Activated CD4-positive, alpha-beta memory T cell treated with anti-CD3 and anti-CD28 coated beads for 36 hours (primary cell): ENCODE measurements at regions of chr11 and their contacts with region 1.

Region 1: DNA sequence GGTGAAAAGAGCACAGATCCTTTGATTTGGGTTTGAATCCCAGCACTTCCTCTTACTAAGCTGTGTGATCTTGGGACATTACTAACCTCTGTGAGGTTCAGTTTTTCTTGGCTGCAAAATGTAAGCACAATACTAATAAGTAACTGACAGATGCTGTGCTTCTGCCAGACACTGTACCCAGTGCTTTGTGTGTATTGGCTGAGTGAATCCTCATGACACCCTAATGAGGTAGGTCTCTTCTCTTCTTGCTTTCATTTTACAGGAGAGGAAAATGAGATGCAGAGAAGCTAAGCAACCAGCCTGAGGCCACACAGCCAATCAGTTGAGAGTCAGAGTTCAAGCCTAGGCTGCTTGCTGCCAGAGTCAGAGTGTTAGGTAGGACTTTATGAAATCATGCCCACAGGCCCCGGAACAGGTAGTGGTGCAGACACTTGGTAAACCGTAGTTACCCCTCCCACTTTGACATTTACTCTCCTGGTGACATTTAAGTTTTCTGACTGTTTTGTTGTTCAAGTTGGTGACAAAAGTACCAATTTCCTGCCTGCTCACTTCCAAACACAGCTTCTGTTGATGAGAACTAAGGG is 21.2 kb downstream of the PTPRJ start:
- DNase-seq: peak; percentile 91
- H3K4me3 Mint-ChIP-seq: peak overlapping the region; percentile 72
- H3K27ac Mint-ChIP-seq: peak overlapping the region; percentile 97
- H3K4me1 Mint-ChIP-seq: peaks cover 84% of the 10 kb centered on the region
- H3K27me3 Mint-ChIP-seq: no peaks in the 10 kb centered on the region

Region 2: DNA sequence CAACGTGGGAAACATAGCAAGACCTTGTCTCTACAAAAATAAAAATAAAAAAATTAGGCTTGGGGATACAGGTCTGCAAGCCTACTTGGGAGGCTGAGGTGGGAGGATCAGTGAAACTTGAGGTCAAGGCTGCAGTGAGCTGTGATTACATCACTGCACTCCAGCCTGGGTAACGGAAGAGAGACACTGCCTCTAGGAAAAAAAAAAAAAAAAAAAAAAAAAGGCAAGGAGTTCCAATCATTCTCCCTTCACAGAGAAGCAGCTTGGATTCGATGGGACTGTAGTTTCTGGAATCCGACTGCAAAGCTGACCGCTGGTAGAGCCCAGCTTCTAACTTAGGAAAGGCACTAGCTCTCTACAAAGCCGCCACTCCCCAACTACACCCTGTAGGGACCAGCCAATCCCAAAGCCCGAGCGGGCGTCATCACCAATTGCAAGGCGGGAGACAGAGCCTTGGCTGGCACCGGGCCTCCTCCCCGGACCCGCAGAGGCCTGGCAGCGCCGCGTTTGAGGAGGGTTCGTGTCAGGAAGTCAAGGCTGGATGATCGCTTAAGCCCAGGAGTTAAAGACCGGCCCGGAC is 787.5 kb before region 1 on chr11:
- CTCF ChIA-PET with region 1: no interaction called
- POLR2A ChIA-PET with region 1: no interaction called
- intact Hi-C with region 1: loop called (anchors 10 kb)
- DNase-seq: peak; percentile 94
- H3K4me3 Mint-ChIP-seq: peak overlapping the region; percentile 97
- H3K27ac Mint-ChIP-seq: peak overlapping the region; percentile 99
- H3K4me1 Mint-ChIP-seq: peaks cover 28% of the 10 kb centered on the region
- H3K27me3 Mint-ChIP-seq: no peaks in the 10 kb centered on the region

Region 3: DNA sequence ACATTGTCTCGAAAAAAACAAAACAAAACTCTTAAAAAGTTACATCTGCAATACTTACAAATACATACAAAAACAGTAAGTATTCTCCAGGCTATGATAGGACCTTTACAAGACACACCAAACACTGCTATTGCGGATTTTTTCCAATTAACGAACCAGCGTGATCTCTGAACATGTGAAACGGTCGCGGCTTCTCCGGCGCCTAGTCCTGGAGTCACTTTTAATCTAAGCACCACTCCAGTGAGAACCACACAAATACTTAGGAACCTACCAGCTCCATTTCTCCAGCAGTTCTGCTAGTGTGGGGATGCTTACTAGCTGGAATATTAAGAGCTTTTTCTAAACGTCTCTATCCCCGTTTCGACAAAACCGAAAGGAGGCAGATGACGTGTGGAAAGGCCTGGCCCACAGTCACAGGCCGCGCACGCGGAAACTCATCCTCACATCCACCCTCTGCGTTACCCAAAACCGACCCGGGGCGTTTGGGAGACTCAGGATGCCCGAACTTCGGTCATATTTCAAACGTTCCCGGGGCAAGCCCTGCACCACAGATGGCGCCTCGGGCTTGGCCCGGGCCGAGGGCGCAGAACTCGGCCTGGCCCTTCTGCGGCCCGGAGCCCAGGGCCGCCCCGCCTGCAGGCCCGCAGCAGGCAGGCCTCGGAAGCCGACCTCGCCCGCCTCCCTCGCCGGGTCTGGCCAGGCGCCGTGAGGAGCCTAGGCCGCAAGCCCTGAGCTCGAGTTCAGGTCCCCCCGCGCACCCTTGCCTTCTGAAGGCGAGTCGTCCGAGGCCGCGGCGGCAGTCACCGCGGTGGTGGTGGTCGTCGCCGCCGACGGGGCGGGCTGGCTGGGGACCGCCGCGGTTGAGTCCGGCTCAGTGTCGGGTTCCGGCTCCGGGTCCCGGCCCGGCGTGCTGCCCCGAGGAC is 235.0 kb before region 1 on chr11:
- CTCF ChIA-PET with region 1: no interaction called
- POLR2A ChIA-PET with region 1: no interaction called
- intact Hi-C with region 1: loop called (anchors 5 kb)
- DNase-seq: peak; percentile 88
- H3K4me3 Mint-ChIP-seq: peak overlapping the region; percentile 91
- H3K27ac Mint-ChIP-seq: peak overlapping the region; percentile 100
- H3K4me1 Mint-ChIP-seq: peaks cover 18% of the 10 kb centered on the region
- H3K27me3 Mint-ChIP-seq: no peaks in the 10 kb centered on the region

Region 4: GRCh38 chr11:47932544-47932943 is 69.0 kb before region 1 on chr11:
- CTCF ChIA-PET with region 1: interaction called, 9 read pairs
- POLR2A ChIA-PET with region 1: interaction called, 3 read pairs
- intact Hi-C with region 1: loop called (anchors 1 kb)
- DNase-seq: no peak
- H3K4me3 Mint-ChIP-seq: no peak overlapping the region
- H3K27ac Mint-ChIP-seq: no peak overlapping the region
- H3K4me1 Mint-ChIP-seq: peaks cover 16% of the 10 kb centered on the region
- H3K27me3 Mint-ChIP-seq: no peaks in the 10 kb centered on the region

Region 5: DNA sequence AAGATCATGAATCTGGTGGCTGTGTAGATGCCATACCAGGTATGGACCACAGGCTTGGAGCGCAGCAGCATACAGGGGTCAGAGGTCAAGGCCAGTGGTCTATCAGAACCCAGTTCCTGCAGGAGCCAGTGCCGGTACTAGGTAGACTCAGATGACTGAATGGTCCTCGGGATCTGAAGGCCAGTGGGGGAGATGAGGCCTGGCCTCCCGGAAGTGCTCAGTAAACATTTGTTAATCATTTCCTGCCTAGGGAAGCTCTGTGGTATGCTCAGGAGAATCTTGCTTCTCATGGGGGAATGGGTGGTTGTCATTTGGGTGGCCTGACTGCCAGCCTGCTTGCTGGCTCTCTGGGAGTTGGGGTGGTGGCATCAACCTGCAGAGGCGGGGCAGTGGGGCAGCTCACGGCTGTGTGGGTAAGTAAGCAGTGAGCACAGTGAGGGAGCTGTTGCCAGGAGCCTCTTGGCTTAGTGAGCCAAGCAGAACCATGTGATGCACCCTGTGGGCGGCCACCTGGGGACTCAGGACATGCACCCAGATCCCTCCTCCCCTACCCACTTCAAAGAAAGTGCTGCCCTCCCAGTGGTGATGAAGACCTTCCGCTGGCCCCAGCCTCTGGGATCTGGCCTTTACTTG is 11.9 kb after region 1 on chr11:
- CTCF ChIA-PET with region 1: interaction called, 23 read pairs
- POLR2A ChIA-PET with region 1: interaction called, 117 read pairs
- intact Hi-C with region 1: loop called (anchors 1 kb)
- DNase-seq: peak; percentile 86
- H3K4me3 Mint-ChIP-seq: peak overlapping the region; percentile 63
- H3K27ac Mint-ChIP-seq: peak overlapping the region; percentile 96
- H3K4me1 Mint-ChIP-seq: peaks cover 88% of the 10 kb centered on the region
- H3K27me3 Mint-ChIP-seq: no peaks in the 10 kb centered on the region

Region 6: DNA sequence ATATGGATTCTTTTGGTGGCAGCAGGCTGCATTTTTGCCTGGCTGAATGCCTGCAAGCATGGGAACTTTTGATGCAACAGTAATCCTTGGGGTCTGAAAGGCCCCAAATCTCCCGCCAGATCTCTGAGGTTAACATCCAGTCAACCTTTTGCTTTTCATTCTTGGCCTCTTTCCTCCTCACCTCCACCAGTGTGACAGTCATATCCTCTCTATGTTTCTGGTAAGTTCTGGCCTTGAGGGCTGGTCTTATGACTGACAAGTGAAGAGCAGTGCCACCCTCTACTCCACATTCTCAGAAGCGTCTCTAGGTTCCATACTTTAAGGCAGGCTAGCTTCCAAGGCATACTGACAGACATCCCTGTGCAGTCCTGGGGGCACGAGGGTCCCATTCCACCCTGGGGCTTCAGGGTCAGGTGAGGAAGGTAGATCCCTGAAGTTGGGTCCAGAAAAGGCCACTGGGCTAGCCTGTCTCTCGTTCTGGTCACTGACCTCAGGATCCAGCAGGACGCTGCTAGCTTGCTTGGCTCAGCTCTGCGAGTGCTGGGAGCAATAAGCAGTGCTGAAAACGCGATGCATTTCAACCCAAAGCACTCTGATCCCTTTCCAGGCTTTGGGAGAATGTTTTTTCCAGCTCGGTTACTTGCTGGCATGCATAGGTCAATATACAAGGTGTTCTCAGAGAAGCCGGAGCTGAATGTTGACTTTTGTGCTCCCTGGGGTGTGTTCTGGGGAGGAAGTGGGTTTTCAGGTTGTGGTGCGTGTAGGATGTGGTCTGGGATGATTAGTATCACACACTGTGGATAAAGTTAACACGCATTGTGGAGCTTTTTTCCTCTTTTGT is 54.0 kb after region 1 on chr11:
- CTCF ChIA-PET with region 1: interaction called, 14 read pairs
- POLR2A ChIA-PET with region 1: interaction called, 23 read pairs
- intact Hi-C with region 1: loop called (anchors 1 kb)
- DNase-seq: peak; percentile 88
- H3K4me3 Mint-ChIP-seq: peak overlapping the region; percentile 65
- H3K27ac Mint-ChIP-seq: peak overlapping the region; percentile 91
- H3K4me1 Mint-ChIP-seq: peaks cover 80% of the 10 kb centered on the region
- H3K27me3 Mint-ChIP-seq: no peaks in the 10 kb centered on the region